ENCODE measurements at regions of chr1 and their contacts with region 1.

Region 1: GRCh38 chr1:44002606-44003157 is 11.3 kb downstream of the CCDC24 start:
- DNase-seq: no peak
- ATAC-seq: no peak
- H3K4me3 ChIP-seq: no peak overlapping the region
- H3K27ac ChIP-seq: no peak overlapping the region
- H3K4me1 ChIP-seq: peaks cover 4% of the 10 kb centered on the region; the same call in 1 of the 3 replicates
- CTCF ChIP-seq: no peak
- EP300 ChIP-seq: no peak
- POLR2A ChIP-seq: no peak
- RAD21 ChIP-seq: no peak

Region 2: GRCh38 chr1:43912607-43913006 is 90.1 kb before region 1 on chr1:
- CTCF ChIA-PET with region 1: no interaction called
- POLR2A ChIA-PET with region 1: no interaction called
- DNase-seq: no peak
- ATAC-seq: no peak
- H3K4me3 ChIP-seq: no peak overlapping the region
- H3K27ac ChIP-seq: peak overlapping the region in 1 of 2 experiments; percentile 46; a peak in 3 of 6 replicates
- H3K4me1 ChIP-seq: peaks cover 6% of the 10 kb centered on the region; the same call in 1 of the 3 replicates
- CTCF ChIP-seq: no peak
- EP300 ChIP-seq: no peak
- POLR2A ChIP-seq: no peak
- RAD21 ChIP-seq: no peak

Region 3: DNA sequence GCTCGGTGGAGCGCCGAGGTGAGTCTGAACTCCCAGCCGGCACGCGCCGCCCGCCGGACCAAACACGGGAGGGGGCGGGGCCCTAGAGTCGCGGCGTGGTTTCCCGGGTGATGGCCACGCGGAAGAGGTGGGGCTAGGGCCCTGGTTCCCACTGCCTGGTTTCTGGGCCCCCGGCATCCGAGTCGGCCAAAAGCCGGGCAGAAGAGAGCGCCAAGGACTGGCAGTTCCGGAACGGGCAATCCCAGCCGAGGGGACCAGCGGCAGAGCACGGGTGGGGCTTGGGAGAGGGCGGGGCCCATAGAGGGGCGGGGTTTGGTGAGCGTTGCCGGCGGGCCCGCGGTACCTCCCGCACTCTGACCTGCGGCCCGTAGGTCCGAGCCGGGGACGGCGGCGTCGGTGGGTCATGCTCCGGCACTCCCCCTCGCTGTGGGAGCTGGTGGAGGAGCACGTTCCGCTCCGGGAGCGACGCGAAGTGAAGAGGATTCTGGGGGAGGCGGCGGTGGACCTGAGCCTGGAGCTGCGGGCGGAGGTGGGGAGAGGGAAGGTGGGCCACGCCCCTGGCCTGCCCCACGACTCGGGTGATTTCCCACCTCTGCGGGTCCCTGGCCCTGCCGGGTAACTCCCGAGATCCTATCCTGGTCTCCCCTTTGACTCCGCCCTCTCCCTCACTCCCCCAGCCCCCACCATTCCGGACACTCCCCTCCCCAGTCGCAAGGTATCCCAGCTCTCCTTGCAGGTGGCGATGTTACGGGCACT is 11.0 kb before region 1 on chr1 and contains the start of gene CCDC24:
- CTCF ChIA-PET with region 1: interaction called, 51 read pairs
- POLR2A ChIA-PET with region 1: no interaction called
- DNase-seq: peak; percentile 65 to 83
- ATAC-seq: peak; percentile 73 to 87
- H3K4me3 ChIP-seq: peak within 1 kb of the TSS; percentile 84
- H3K27ac ChIP-seq: peak within 1 kb of the TSS; percentile 87 to 89
- H3K4me1 ChIP-seq: peaks cover 27% of the 10 kb centered on the region
- CTCF ChIP-seq: no peak
- EP300 ChIP-seq: no peak
- POLR2A ChIP-seq: peak; percentile 43
- RAD21 ChIP-seq: no peak
- polyA plus RNA-seq, gene CCDC24: 2.0 and 2.9 TPM in 2 replicates

Region 4: DNA sequence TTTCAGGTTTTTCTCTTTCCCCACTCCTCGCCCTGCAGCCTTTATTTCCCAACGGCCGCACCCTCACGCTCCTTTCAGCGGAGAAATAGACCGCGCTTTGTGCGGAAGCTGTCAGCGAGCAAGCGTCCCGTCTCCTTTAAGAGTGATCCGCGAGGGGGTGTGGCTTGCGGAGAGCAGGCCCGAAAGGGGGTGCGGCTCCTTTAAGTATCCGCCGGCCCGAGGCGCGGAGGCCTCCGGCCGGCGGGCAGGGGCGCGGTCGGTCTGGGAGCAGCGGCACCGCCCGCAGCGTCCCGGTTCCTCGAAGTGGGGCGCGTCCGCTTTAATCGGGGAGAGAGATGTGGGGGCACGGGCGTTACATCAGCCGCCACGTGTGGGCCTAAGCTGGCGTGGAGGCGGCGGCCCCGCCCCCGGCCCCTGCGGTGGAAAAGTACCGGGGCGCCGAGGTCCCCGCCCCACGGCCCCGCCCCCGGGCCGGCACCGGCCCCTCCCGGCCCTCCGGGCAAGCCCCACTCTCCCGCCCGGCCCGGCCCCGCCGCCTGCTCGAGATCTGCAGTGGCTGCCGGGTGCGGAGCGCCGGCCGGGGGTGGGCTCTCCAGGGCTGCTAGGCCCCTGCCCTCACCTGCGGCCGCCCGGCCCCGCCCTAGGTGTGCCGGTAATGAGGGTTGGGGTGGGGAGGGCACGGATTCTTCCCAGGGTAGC is 27.4 kb after region 1 on chr1:
- CTCF ChIA-PET with region 1: interaction called, 412 read pairs
- POLR2A ChIA-PET with region 1: no interaction called
- DNase-seq: peak; percentile 76 to 88
- ATAC-seq: peak; percentile 78 to 80
- H3K4me3 ChIP-seq: peak overlapping the region; percentile 82
- H3K27ac ChIP-seq: peak overlapping the region; percentile 96 to 99
- H3K4me1 ChIP-seq: peaks cover 46% of the 10 kb centered on the region
- CTCF ChIP-seq: no peak
- EP300 ChIP-seq: no peak
- POLR2A ChIP-seq: peak; percentile 57
- RAD21 ChIP-seq: no peak

Region 5: GRCh38 chr1:44057293-44057692 is 54.6 kb after region 1 on chr1:
- CTCF ChIA-PET with region 1: interaction called, 10 read pairs
- POLR2A ChIA-PET with region 1: no interaction called
- DNase-seq: no peak
- ATAC-seq: no peak
- H3K4me3 ChIP-seq: no peak overlapping the region
- H3K27ac ChIP-seq: no peak overlapping the region
- H3K4me1 ChIP-seq: peaks cover 7% of the 10 kb centered on the region
- CTCF ChIP-seq: no peak
- EP300 ChIP-seq: no peak
- POLR2A ChIP-seq: no peak
- RAD21 ChIP-seq: no peak

Measured in A549 (cell line).